ENCODE measurements at regions of chr9 and their contacts with region 1.

Region 1: DNA sequence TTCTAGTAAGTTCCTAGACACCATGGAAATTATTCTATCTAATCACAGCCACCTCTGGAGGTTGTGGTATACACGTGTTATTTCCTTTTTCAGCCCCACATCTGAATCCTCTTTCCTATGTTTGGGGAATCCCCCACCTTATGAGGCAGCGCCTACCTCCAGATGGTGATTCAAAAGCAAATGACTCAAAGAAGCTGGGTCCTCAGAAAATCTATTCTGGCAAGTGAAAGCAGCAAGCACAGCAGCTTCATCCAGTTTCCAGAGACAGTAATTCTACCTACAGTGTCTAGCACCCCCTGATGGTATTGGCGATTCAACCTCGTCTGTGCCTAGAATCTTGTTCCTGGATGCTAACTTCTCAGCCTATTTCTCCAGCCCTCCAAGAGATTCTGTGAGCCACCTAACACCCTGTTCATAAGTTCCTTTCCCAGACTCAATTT is 43.0 kb downstream of the STRBP start:
- DNase-seq: peak; percentile 91
- H3K4me3 ChIP-seq: peak overlapping the region; percentile 1
- H3K27ac ChIP-seq: peak overlapping the region; percentile 38
- H3K4me1 ChIP-seq: peaks cover 56% of the 10 kb centered on the region
- CTCF ChIP-seq: peak; percentile 94

Region 2: GRCh38 chr9:123002754-123003153 is 222.6 kb before region 1 on chr9:
- CTCF ChIA-PET with region 1: no interaction called
- POLR2A ChIA-PET with region 1: no interaction called
- intact Hi-C with region 1: no loop called
- DNase-seq: no peak
- H3K4me3 ChIP-seq: no peak overlapping the region
- H3K27ac ChIP-seq: no peak overlapping the region
- H3K4me1 ChIP-seq: no peaks in the 10 kb centered on the region
- CTCF ChIP-seq: no peak

Region 3: DNA sequence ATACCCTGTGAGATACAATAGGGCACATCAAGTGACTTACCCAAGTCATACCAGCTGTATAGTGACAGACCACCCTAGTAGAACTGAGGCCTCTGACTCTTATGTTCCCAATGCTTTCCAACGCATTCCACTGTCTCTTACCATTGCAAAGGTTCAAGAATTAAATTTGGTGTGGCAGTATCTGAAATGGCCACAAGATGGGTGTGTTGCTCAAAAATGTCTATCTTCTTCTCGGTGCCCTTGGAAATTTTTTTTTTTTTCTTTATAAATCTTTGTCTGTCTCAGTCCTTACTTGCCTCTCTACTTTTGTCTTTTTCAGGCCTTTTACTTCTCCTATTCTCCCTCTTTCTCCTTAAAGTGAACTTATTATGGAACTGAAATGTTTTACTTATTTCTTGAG is 143.6 kb before region 1 on chr9:
- CTCF ChIA-PET with region 1: no interaction called
- POLR2A ChIA-PET with region 1: interaction called, 4 read pairs
- intact Hi-C with region 1: loop called (anchors 1 kb)
- DNase-seq: peak; percentile 65
- H3K4me3 ChIP-seq: no peak overlapping the region
- H3K27ac ChIP-seq: no peak overlapping the region
- H3K4me1 ChIP-seq: peaks cover 29% of the 10 kb centered on the region
- CTCF ChIP-seq: peak; percentile 94

Region 4: GRCh38 chr9:123091459-123091858 is 133.9 kb before region 1 on chr9:
- CTCF ChIA-PET with region 1: interaction called, 3 read pairs
- POLR2A ChIA-PET with region 1: interaction called, 12 read pairs
- intact Hi-C with region 1: no loop called
- DNase-seq: peak; percentile 51
- H3K4me3 ChIP-seq: no peak overlapping the region
- H3K27ac ChIP-seq: peak overlapping the region; percentile 60
- H3K4me1 ChIP-seq: peaks cover 80% of the 10 kb centered on the region
- CTCF ChIP-seq: peak; percentile 88

Region 5: GRCh38 chr9:123102375-123103110 is 122.9 kb before region 1 on chr9:
- CTCF ChIA-PET with region 1: interaction called, 3 read pairs
- POLR2A ChIA-PET with region 1: interaction called, 3 read pairs
- intact Hi-C with region 1: loop called (anchors 1 kb)
- DNase-seq: peak; percentile 48
- H3K4me3 ChIP-seq: no peak overlapping the region
- H3K27ac ChIP-seq: no peak overlapping the region
- H3K4me1 ChIP-seq: peaks cover 20% of the 10 kb centered on the region
- CTCF ChIP-seq: peak; percentile 85

Region 6: DNA sequence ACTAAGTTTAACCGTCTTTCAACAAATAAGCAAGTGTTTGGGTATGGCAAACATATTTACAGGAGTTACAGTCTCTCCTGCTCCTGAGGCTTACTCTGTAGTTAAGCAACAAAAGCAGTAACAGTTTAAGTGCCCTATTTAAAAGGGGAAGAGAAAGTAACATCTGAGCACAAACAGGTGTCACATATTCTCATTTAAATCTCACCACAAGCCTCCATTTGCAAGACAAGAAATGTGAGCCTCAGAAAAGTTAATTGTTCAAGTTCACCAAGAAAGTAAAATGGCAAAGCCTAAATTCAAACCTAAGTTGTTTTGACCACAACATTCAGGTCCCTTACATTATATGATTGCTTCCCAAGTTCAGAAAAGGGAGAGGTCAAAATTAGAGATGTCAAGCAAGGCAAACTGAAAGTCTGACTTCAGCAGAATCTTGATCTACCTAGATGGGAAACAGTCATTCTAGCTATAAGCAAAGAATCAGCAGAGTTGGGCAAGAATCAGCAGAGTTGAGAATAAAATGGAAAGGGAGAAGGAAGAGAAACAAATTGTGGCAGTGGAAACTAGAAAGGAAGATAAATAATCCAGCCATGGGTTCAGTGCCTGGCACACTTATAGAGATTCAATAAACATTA is 50.4 kb before region 1 on chr9:
- CTCF ChIA-PET with region 1: no interaction called
- POLR2A ChIA-PET with region 1: interaction called, 4 read pairs
- intact Hi-C with region 1: loop called (anchors 1 kb)
- DNase-seq: peak; percentile 93
- H3K4me3 ChIP-seq: peak overlapping the region; percentile 55
- H3K27ac ChIP-seq: peak overlapping the region; percentile 99
- H3K4me1 ChIP-seq: peaks cover 99% of the 10 kb centered on the region
- CTCF ChIP-seq: no peak

Region 7: GRCh38 chr9:123251741-123252140 is 26.3 kb after region 1 on chr9:
- CTCF ChIA-PET with region 1: no interaction called
- POLR2A ChIA-PET with region 1: interaction called, 11 read pairs
- intact Hi-C with region 1: no loop called
- DNase-seq: no peak
- H3K4me3 ChIP-seq: no peak overlapping the region
- H3K27ac ChIP-seq: no peak overlapping the region
- H3K4me1 ChIP-seq: peaks cover 31% of the 10 kb centered on the region
- CTCF ChIP-seq: no peak